ENCODE measurements at regions of chr1 and their contacts with region 1.

Region 1: DNA sequence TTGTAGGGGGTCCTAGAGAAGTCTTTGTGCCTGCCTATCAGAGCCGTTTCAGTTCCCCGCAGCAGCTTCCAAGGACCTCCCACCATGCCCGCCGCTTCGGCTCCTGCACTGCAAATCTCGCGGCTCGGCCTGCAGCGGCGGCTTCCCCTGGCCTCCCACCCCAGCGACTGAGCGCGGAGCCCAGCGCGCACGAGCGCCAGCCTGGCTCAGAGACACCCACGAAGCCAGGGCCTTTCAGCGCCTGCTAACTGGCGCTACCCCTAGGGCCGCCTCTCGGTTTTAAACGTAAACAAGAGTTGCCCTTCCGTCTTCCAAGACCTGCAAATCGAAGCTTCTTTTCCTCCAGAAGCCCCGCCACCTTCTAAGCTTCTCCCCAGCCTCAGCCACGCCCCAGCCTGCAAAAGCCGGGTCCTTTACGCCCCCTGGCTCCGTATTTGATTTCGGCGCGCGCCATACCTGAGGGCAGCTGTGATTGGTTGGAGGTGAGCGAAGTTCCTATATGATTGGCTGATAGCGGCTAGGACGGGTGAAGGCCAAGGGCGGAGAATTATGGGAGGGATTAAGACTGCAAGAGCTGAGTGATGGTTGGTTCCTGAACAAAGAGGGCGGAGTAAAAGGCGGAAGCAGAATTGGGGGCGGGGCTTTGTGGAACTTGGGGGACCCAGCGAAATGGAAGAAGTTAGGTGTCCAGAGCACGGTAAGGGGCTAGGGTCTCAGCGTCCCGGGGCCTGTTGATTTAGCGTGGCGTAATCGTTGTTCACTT is at the start of gene TTF2:
- DNase-seq: peak; percentile 82 to 99 (median 98)
- ATAC-seq: peak; percentile 96
- H3K4me3 ChIP-seq: peak within 1 kb of the TSS; percentile 81
- H3K4me3 Mint-ChIP-seq: no peak within 1 kb of the TSS
- H3K27ac ChIP-seq: peak within 1 kb of the TSS; percentile 82
- H3K27ac Mint-ChIP-seq: peak within 1 kb of the TSS in 4 of 9 donors; percentile 45 to 83 (median 62)
- H3K4me1 ChIP-seq: peaks cover 6 to 9% of the 10 kb centered on the region in 2 donors
- H3K4me1 Mint-ChIP-seq: peaks cover 19 to 60% (median 41%) of the 10 kb centered on the region in 7 donors
- H3K27me3 ChIP-seq: no peaks in the 10 kb centered on the region
- H3K27me3 Mint-ChIP-seq: no peaks in the 10 kb centered on the region
- total RNA-seq, gene TTF2: 27.6 to 74.4 (median 35.2) TPM

Region 2: DNA sequence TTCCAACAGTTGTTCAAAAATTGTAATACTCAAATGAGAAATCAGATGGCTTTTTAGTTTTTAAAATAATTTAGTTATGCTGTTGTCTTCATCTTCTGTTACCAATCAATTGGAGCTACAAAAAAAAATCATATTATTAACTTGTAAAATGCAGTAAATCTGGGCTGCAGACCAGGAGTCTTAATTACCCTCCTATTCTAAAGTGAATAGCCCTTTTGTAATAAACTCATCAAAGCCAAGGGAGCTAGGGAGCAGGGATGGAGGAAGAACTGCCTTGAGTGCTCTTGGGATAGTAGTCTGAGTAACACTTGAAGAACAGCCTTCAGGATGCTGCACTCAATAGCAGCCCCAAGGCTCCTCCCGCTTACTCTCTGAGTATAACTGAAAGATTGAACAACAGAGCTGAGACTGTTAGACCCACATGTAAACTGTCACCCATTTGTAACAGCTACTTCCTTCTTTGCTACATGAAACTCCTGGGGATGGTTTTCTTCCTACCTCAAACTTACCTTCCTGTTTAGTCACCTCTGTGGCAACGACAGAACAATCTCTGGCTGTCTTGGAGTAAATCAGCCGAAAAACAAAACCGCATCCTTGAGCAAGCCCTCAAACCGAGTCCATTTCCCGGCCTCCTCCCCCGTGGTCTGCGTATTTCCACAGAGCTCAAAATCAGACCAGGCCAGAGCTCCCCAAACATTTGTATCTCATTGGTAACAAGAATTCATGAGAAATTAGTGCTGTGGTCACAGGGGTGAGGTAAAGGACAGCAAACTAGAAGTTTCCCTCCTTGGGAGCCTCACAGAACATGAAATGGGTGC is 544.9 kb before region 1 on chr1:
- CTCF ChIA-PET with region 1: no interaction called
- POLR2A ChIA-PET with region 1: no interaction called
- intact Hi-C with region 1: loop called in 1 of 2 experiments (anchors 5 kb)
- DNase-seq: peak in 8 of 9 donors; percentile 11 to 71 (median 30)
- ATAC-seq: peak; percentile 82
- H3K4me3 ChIP-seq: peak overlapping the region; percentile 12
- H3K4me3 Mint-ChIP-seq: peak overlapping the region; percentile 48 to 82 (median 72)
- H3K27ac ChIP-seq: peak overlapping the region; percentile 25
- H3K27ac Mint-ChIP-seq: peak overlapping the region; percentile 66 to 93 (median 88)
- H3K4me1 ChIP-seq: peaks cover 30 to 49% of the 10 kb centered on the region in 2 donors
- H3K4me1 Mint-ChIP-seq: peaks cover 37 to 72% (median 53%) of the 10 kb centered on the region in 7 donors
- H3K27me3 ChIP-seq: no peaks in the 10 kb centered on the region
- H3K27me3 Mint-ChIP-seq: no peaks in the 10 kb centered on the region

Region 3: GRCh38 chr1:116763787-116764465 is 295.9 kb before region 1 on chr1:
- CTCF ChIA-PET with region 1: interaction called, 6 read pairs
- POLR2A ChIA-PET with region 1: interaction called, 19 read pairs
- intact Hi-C with region 1: loop called (anchors 1 kb)
- DNase-seq: peak in 2 of 9 donors; percentile 64 to 66
- ATAC-seq: peak; percentile 10
- H3K4me3 ChIP-seq: peak overlapping the region; percentile 17
- H3K4me3 Mint-ChIP-seq: peak overlapping the region; percentile 79 to 99 (median 85)
- H3K27ac ChIP-seq: peak overlapping the region; percentile 89
- H3K27ac Mint-ChIP-seq: peak overlapping the region; percentile 93 to 100 (median 97)
- H3K4me1 ChIP-seq: peaks cover 94 to 100% of the 10 kb centered on the region in 2 donors
- H3K4me1 Mint-ChIP-seq: peaks cover 74 to 100% (median 94%) of the 10 kb centered on the region in 7 donors
- H3K27me3 ChIP-seq: no peaks in the 10 kb centered on the region
- H3K27me3 Mint-ChIP-seq: no peaks in the 10 kb centered on the region

Region 4: GRCh38 chr1:116934586-116935207 is 125.2 kb before region 1 on chr1:
- CTCF ChIA-PET with region 1: no interaction called
- POLR2A ChIA-PET with region 1: interaction called, 5 read pairs
- intact Hi-C with region 1: loop called in 1 of 2 experiments (anchors 1 kb)
- DNase-seq: peak in 5 of 9 donors; percentile 34 to 46 (median 39)
- ATAC-seq: peak; percentile 58
- H3K4me3 ChIP-seq: no peak overlapping the region
- H3K4me3 Mint-ChIP-seq: peak overlapping the region in 4 of 10 donors; percentile 4 to 40 (median 19)
- H3K27ac ChIP-seq: no peak overlapping the region
- H3K27ac Mint-ChIP-seq: peak overlapping the region in 8 of 9 donors; percentile 21 to 82 (median 52)
- H3K4me1 ChIP-seq: peaks cover 20 to 22% of the 10 kb centered on the region in 2 donors
- H3K4me1 Mint-ChIP-seq: peaks cover 14 to 28% (median 24%) of the 10 kb centered on the region in 7 donors
- H3K27me3 ChIP-seq: no peaks in the 10 kb centered on the region
- H3K27me3 Mint-ChIP-seq: no peaks in the 10 kb centered on the region

Region 5: DNA sequence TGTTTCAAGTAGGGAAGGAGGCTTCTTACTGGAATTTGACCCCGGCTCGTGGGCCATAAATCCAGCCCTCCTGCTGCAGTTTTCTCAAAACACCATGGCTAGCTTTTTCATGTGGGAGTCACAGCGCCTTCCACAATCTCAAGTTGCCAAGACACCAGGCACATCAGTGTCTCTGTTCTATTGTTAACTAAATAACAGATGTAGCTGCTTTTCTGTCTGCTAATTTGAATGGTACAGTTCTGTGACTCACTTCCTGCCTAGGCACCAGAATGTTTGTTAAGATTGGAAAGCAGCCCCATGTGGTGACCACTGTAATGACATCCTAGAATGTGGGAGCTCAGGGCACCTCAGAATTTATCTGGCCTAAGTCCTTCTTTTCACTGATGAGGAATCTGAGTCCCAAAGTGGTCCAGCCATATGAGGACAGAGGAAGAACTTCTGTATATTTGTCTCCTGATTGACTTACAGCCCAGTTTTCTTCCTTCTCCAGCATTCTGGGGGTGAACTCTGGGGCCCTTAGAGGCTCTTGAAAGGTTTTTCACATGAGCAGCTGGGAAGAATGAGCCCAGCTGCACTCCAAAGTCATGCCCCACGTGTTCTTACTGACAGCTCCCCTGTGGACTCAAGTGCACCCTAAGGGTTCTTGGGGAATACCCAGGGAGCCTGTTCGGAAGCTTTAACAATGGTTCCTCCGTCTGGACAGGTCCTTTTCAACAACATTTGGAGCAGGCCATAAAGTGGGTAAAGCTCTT is 34.2 kb after region 1 on chr1:
- CTCF ChIA-PET with region 1: no interaction called
- POLR2A ChIA-PET with region 1: no interaction called
- intact Hi-C with region 1: loop called in 1 of 2 experiments (anchors 1 kb)
- DNase-seq: peak in 7 of 9 donors; percentile 2 to 31 (median 14)
- ATAC-seq: peak; percentile 79
- H3K4me3 ChIP-seq: no peak overlapping the region
- H3K4me3 Mint-ChIP-seq: no peak overlapping the region
- H3K27ac ChIP-seq: no peak overlapping the region
- H3K27ac Mint-ChIP-seq: peak overlapping the region in 3 of 9 donors; percentile 7 to 57 (median 12)
- H3K4me1 ChIP-seq: no peaks in the 10 kb centered on the region
- H3K4me1 Mint-ChIP-seq: peaks cover 0 to 19% (median 2%) of the 10 kb centered on the region in 7 donors
- H3K27me3 ChIP-seq: no peaks in the 10 kb centered on the region
- H3K27me3 Mint-ChIP-seq: no peaks in the 10 kb centered on the region

Region 6: DNA sequence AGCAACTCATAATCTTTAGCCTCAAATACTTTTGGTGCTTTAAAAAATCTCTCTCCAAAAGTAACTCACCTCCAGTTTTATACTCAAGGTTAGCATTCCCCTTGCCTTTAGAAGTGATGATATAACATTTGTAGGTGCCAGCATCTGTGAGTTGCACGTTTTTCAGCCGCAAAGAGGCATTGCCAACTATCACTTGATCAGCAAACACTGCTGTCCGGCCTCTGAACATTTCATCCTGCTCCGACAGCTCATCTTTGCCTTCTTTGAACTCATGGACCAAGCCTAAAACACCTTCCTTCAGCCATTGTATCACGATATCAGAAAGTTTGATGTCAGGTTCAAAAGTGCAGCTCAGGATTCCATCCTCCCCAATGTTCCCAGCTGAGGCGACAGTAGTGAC is 96.6 kb after region 1 on chr1:
- CTCF ChIA-PET with region 1: no interaction called
- POLR2A ChIA-PET with region 1: no interaction called
- intact Hi-C with region 1: no loop called
- DNase-seq: no peak
- ATAC-seq: no peak
- H3K4me3 ChIP-seq: no peak overlapping the region
- H3K4me3 Mint-ChIP-seq: no peak overlapping the region
- H3K27ac ChIP-seq: no peak overlapping the region
- H3K27ac Mint-ChIP-seq: no peak overlapping the region
- H3K4me1 ChIP-seq: no peaks in the 10 kb centered on the region
- H3K4me1 Mint-ChIP-seq: peaks cover 0 to 4% (median 0%) of the 10 kb centered on the region in 7 donors
- H3K27me3 ChIP-seq: no peaks in the 10 kb centered on the region
- H3K27me3 Mint-ChIP-seq: peaks cover 9 to 25% (median 14%) of the 10 kb centered on the region in 5 donors

Region 7: GRCh38 chr1:117599286-117600221 is 539.7 kb after region 1 on chr1:
- CTCF ChIA-PET with region 1: no interaction called
- POLR2A ChIA-PET with region 1: no interaction called
- intact Hi-C with region 1: no loop called
- DNase-seq: no peak
- ATAC-seq: no peak
- H3K4me3 ChIP-seq: no peak overlapping the region
- H3K4me3 Mint-ChIP-seq: no peak overlapping the region
- H3K27ac ChIP-seq: no peak overlapping the region
- H3K27ac Mint-ChIP-seq: no peak overlapping the region
- H3K4me1 ChIP-seq: no peaks in the 10 kb centered on the region
- H3K4me1 Mint-ChIP-seq: peaks cover 0 to 2% (median 1%) of the 10 kb centered on the region in 7 donors
- H3K27me3 ChIP-seq: no peaks in the 10 kb centered on the region
- H3K27me3 Mint-ChIP-seq: peaks cover 0 to 51% (median 0%) of the 10 kb centered on the region in 5 donors

Region 8: DNA sequence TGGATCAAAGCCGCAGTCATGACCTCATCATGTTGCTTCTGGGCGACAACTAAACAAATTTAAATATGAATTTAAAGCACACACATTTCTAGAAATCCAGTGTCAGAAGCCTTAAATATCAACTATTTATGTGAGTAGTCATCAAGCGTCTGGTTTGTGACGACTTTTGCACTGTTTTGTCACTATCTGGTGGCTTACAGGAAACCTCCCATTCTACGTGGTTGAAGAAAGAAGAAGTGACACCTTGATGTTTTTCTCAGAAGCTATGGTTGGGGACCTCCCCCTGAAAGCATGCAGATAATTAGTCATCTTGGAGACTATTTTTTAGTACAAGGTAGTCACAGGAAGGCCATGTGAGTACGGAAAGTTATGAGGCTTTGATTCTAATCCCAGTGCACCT is 604.5 kb after region 1 on chr1:
- CTCF ChIA-PET with region 1: no interaction called
- POLR2A ChIA-PET with region 1: no interaction called
- intact Hi-C with region 1: loop called (anchors 1 to 2 kb)
- DNase-seq: peak in 8 of 9 donors; percentile 49 to 87 (median 83)
- ATAC-seq: peak; percentile 88
- H3K4me3 ChIP-seq: peak overlapping the region; percentile 5
- H3K4me3 Mint-ChIP-seq: peak overlapping the region in 7 of 10 donors; percentile 19 to 60 (median 37)
- H3K27ac ChIP-seq: no peak overlapping the region
- H3K27ac Mint-ChIP-seq: peak overlapping the region; percentile 74 to 97 (median 93)
- H3K4me1 ChIP-seq: peaks cover 38 to 71% of the 10 kb centered on the region in 2 donors
- H3K4me1 Mint-ChIP-seq: peaks cover 35 to 81% (median 66%) of the 10 kb centered on the region in 7 donors
- H3K27me3 ChIP-seq: no peaks in the 10 kb centered on the region
- H3K27me3 Mint-ChIP-seq: peaks cover 0 to 15% (median 4%) of the 10 kb centered on the region in 5 donors